ENCODE measurements at regions of chr18 and their contacts with region 1.

Region 1: GRCh38 chr18:59988098-59988706 is 88.4 kb downstream of the PMAIP1 start:
- DNase-seq: peak; percentile 69
- ATAC-seq: no peak
- H3K4me3 ChIP-seq: no peak overlapping the region
- H3K27ac ChIP-seq: no peak overlapping the region
- H3K4me1 ChIP-seq: peaks cover 24% of the 10 kb centered on the region
- H3K27me3 ChIP-seq: no peaks in the 10 kb centered on the region
- CTCF ChIP-seq: peak; percentile 96

Region 2: DNA sequence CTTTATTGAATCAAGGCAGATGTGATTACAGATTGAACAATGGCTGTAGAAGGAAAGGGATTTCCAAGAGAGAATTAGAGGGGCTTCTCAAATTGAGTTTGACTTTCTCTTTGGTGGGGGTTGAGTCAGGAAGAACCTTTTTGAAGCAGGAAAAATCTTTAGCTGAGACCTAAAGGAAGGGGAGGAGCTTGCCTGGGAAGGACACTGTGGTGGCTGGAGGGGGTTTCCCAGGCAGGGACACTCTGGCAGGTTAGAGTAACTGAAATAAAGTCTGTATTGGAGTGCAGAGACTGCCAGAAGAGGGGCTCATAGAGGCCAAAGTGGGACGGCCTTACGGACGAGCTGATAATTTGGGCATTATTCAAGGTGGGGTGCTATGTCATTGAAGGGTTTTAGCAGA is 1874.9 kb before region 1 on chr18:
- CTCF ChIA-PET with region 1: no interaction called
- POLR2A ChIA-PET with region 1: no interaction called
- intact Hi-C with region 1: no loop called
- DNase-seq: no peak
- ATAC-seq: no peak
- H3K4me3 ChIP-seq: no peak overlapping the region
- H3K27ac ChIP-seq: no peak overlapping the region
- H3K4me1 ChIP-seq: peaks cover 23% of the 10 kb centered on the region
- H3K27me3 ChIP-seq: no peaks in the 10 kb centered on the region
- CTCF ChIP-seq: no peak

Region 3: DNA sequence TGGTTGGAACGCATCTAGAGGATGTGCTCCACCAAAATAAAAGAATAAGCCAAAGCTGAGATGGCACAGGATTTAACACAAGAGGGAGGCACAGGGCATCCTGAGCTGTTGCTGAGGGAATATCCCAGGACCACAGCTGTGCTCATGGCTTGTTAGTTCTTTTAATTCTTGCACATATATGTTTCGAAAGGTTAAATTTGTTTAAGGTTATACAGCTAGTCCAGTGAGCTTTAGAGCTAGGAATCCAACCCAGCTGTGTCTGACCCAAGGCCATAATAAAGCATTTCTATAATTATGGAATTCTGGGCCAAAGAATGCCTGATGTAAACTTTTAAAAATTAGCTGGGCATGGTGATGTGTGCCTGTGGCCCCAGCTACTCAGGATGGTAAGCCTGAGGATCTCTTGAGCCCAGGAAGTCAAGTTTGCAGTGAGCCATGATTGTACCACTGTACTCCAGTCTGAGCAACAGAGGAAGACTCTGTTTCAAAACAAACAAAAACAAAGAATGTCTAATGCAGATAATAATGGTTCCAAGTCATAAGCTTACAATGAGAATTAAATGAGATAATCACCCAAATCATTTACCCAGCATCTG is 224.6 kb before region 1 on chr18:
- CTCF ChIA-PET with region 1: no interaction called
- POLR2A ChIA-PET with region 1: no interaction called
- intact Hi-C with region 1: no loop called
- DNase-seq: no peak
- ATAC-seq: no peak
- H3K4me3 ChIP-seq: no peak overlapping the region
- H3K27ac ChIP-seq: no peak overlapping the region
- H3K4me1 ChIP-seq: no peaks in the 10 kb centered on the region
- H3K27me3 ChIP-seq: no peaks in the 10 kb centered on the region
- CTCF ChIP-seq: no peak

Region 4: GRCh38 chr18:59837586-59837985 is 150.6 kb before region 1 on chr18:
- CTCF ChIA-PET with region 1: interaction called, 13 read pairs
- POLR2A ChIA-PET with region 1: no interaction called
- intact Hi-C with region 1: loop called (anchors 1 kb)
- DNase-seq: peak; percentile 88
- ATAC-seq: peak; percentile 87
- H3K4me3 ChIP-seq: no peak overlapping the region
- H3K27ac ChIP-seq: no peak overlapping the region
- H3K4me1 ChIP-seq: no peaks in the 10 kb centered on the region
- H3K27me3 ChIP-seq: no peaks in the 10 kb centered on the region
- CTCF ChIP-seq: peak; percentile 96

Region 5: GRCh38 chr18:59899298-59900221 is 88.6 kb before region 1 on chr18 and contains the start of gene PMAIP1:
- CTCF ChIA-PET with region 1: no interaction called
- POLR2A ChIA-PET with region 1: interaction called, 5 read pairs
- intact Hi-C with region 1: loop called (anchors 5 kb)
- DNase-seq: peak; percentile 94
- ATAC-seq: peak; percentile 71
- H3K4me3 ChIP-seq: peak within 1 kb of the TSS; percentile 83
- H3K27ac ChIP-seq: peak within 1 kb of the TSS; percentile 94
- H3K4me1 ChIP-seq: peaks cover 47% of the 10 kb centered on the region
- H3K27me3 ChIP-seq: no peaks in the 10 kb centered on the region
- CTCF ChIP-seq: no peak
- total RNA-seq, gene PMAIP1: 39.2 and 41.5 TPM in 2 replicates

Region 6: DNA sequence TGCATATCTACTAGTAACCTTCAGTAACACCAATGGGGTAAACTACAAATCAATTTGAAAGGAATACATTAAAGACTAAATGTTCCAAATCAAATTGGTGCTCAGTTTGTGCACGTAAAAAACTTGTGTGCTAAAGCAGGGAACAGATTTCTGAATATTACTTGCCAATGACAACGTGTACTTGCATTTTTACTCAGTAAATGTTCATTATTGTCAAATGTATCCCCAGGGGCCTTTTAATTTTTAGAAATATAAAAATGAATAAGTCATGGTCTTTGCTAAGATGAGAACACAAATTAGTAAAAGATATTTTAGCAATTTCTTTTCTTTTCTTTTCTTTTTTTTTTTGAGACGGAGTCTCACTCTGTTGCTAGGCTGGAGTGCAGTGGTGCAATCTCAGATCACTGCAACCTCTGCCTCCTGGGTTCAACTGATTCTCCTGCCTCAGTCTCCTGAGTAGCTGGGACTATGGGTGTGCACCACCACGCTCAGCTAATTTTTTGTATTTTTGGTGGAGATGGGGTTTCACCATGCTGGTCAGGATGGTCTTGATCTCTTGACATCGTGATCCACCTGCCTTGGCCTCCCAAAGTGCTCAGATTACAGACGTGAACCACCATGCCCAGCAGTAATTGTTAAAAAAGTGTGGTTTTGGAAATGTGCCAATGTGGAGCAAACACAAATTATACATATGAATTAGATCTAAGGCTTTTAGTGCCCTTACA is 35.8 kb before region 1 on chr18:
- CTCF ChIA-PET with region 1: interaction called, 3 read pairs
- POLR2A ChIA-PET with region 1: no interaction called
- intact Hi-C with region 1: loop called (anchors 1 kb)
- DNase-seq: no peak
- ATAC-seq: peak; percentile 9
- H3K4me3 ChIP-seq: no peak overlapping the region
- H3K27ac ChIP-seq: peak overlapping the region; percentile 72
- H3K4me1 ChIP-seq: peaks cover 41% of the 10 kb centered on the region
- H3K27me3 ChIP-seq: no peaks in the 10 kb centered on the region
- CTCF ChIP-seq: no peak

Region 7: GRCh38 chr18:60413944-60414547 is 425.8 kb after region 1 on chr18:
- CTCF ChIA-PET with region 1: interaction called, 3 read pairs
- POLR2A ChIA-PET with region 1: no interaction called
- intact Hi-C with region 1: loop called (anchors 1 kb)
- DNase-seq: peak; percentile 53
- ATAC-seq: peak; percentile 89
- H3K4me3 ChIP-seq: no peak overlapping the region
- H3K27ac ChIP-seq: no peak overlapping the region
- H3K4me1 ChIP-seq: no peaks in the 10 kb centered on the region
- H3K27me3 ChIP-seq: no peaks in the 10 kb centered on the region
- CTCF ChIP-seq: peak; percentile 85

Region 8: DNA sequence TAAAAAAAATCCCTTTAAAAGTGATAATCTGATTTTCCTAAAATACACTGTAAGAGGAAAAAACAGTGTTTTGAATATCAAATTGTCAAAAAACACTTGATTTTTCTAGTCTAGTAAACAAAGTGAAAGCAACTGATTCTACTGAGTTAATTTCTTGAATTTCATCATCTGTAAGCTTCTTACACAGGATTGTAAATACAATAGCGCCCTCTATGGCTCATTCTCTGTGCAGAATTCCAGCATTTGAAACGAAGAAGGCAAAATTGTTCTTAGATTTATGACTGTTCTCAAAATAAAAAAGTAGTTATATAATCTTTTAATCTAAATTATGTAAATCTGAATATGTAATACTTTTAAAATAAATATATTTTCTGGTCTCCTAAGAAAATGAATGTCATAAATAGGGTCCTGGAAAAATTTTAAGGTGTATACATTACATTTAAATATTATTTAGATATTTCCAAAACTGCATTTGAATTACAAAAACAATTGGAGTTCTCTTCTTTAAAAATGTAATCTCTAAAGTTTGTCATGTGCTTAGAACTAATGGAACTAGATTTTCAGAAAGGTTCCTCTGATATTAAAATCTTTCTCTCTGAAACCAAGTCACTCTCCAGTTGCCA is 561.2 kb after region 1 on chr18:
- CTCF ChIA-PET with region 1: no interaction called
- POLR2A ChIA-PET with region 1: no interaction called
- intact Hi-C with region 1: loop called (anchors 1 kb)
- DNase-seq: peak; percentile 87
- ATAC-seq: peak; percentile 59
- H3K4me3 ChIP-seq: peak overlapping the region; percentile 46; the same call in 1 of the 2 replicates
- H3K27ac ChIP-seq: no peak overlapping the region
- H3K4me1 ChIP-seq: no peaks in the 10 kb centered on the region
- H3K27me3 ChIP-seq: no peaks in the 10 kb centered on the region
- CTCF ChIP-seq: peak; percentile 81

Region 9: GRCh38 chr18:60684843-60685513 is 696.8 kb after region 1 on chr18:
- CTCF ChIA-PET with region 1: no interaction called
- POLR2A ChIA-PET with region 1: no interaction called
- intact Hi-C with region 1: loop called (anchors 5 kb)
- DNase-seq: peak; percentile 42
- ATAC-seq: peak; percentile 61
- H3K4me3 ChIP-seq: no peak overlapping the region
- H3K27ac ChIP-seq: no peak overlapping the region
- H3K4me1 ChIP-seq: no peaks in the 10 kb centered on the region
- H3K27me3 ChIP-seq: peaks cover 29% of the 10 kb centered on the region
- CTCF ChIP-seq: peak; percentile 82